Lower leg skin (tissue), 4 donors: ENCODE measurements at regions of chr7 and their contacts with region 1.

Region 1: GRCh38 chr7:24819916-24820689 is 62.8 kb upstream of the GSDME start:
- DNase-seq: peak; percentile 93 to 95
- H3K4me3 ChIP-seq: no peak overlapping the region
- CTCF ChIP-seq: peak in 1 of 3 donors; percentile 56
- POLR2A ChIP-seq: no peak

Region 2: DNA sequence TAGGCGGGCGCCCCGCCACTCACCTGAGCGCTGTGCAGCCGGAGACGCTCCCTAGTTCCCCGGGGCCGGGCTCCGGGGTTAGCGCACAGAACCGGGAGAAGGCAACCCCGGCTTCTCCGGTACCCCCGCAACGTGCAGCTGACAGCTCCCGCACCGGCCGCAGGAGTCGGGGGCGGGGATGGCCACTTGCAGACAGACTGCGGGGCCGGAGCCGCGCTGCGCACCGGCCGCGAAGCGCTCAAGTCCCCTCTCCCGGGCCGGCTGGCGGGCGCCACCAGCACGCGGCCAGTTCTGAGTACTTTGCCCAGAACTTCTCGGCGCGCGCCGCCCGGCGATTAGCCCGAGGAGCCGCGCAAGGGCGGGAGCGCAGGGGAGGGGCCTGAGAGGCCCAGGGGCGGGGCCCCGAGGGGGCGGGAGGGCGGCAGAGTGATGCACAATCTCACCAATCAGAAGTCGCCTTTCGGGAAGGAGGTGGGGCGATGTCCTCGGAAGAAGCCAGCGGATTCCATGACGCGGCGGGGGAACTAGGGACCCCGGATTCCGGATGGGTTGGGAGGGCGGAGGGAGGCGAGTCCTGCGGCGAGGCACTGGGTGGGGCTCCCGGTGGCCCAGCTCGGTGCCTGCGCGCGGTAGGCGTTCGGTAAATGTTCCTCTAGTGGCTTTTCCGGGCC is 159.9 kb after region 1 on chr7 and contains the start of gene OSBPL3:
- intact Hi-C with region 1: loop called (anchors 5 kb)
- DNase-seq: peak; percentile 94 to 99
- H3K4me3 ChIP-seq: peak within 1 kb of the TSS; percentile 77
- CTCF ChIP-seq: no peak
- POLR2A ChIP-seq: no peak
- total RNA-seq, gene OSBPL3: 21.9 to 40.3 (median 23.7) TPM

Region 3: DNA sequence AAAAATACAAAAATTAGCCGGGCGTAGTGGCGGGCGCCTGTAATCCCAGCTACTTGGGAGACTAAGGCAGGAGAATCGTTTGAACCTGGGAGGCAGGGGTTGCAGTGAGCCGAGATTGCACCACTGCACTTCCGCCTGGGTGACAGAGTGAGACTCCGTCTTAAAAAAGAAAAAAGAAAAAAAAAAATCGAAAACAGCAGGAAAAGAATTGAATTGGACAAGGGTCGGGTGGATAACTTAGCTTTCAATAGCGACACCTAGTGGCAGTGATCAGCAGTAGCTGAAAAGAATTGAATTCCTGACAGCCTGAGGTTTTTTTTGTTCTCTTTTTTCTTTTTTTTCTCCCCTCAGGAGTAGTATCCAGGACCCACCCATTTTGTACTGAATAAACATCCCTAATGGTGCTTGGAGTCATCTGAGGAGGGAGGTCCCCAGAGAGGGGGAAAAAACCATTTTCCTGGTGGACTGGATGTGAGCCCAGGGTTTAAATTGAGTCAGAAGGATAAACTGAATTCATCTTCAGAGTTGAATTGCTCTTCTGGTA is 249.9 kb after region 1 on chr7:
- intact Hi-C with region 1: loop called (anchors 5 kb)
- DNase-seq: peak in 1 of 2 donors; percentile 35
- H3K4me3 ChIP-seq: no peak overlapping the region
- CTCF ChIP-seq: no peak
- POLR2A ChIP-seq: no peak

Region 4: GRCh38 chr7:25093268-25093826 is 273.2 kb after region 1 on chr7:
- intact Hi-C with region 1: loop called (anchors 5 kb)
- DNase-seq: peak; percentile 42 to 91
- H3K4me3 ChIP-seq: no peak overlapping the region
- CTCF ChIP-seq: peak in 1 of 3 donors; percentile 17
- POLR2A ChIP-seq: no peak

Region 5: DNA sequence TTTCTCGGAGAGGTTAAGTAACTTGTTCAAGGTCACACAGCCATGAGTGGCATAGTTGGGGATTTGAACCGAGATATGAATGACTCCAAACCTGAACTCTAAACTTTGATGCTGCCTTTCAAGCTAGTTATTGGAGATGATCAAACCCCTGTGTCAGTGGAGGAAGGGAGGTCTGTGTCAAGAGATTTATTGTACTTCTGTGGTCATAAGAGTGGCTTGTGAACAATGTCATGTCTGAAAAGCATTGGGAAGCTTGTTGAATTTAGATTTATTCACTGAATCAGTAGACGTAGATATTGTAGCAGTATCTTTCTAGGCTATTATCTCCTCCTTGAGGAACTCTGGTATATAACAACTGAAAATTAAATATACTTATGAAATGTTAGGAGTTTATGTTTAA is 1498.8 kb after region 1 on chr7:
- intact Hi-C with region 1: no loop called
- DNase-seq: no peak
- H3K4me3 ChIP-seq: no peak overlapping the region
- CTCF ChIP-seq: no peak
- POLR2A ChIP-seq: no peak